MCF 10A (cell line): ENCODE measurements at regions of chr14 and their contacts with region 1.

Region 1: DNA sequence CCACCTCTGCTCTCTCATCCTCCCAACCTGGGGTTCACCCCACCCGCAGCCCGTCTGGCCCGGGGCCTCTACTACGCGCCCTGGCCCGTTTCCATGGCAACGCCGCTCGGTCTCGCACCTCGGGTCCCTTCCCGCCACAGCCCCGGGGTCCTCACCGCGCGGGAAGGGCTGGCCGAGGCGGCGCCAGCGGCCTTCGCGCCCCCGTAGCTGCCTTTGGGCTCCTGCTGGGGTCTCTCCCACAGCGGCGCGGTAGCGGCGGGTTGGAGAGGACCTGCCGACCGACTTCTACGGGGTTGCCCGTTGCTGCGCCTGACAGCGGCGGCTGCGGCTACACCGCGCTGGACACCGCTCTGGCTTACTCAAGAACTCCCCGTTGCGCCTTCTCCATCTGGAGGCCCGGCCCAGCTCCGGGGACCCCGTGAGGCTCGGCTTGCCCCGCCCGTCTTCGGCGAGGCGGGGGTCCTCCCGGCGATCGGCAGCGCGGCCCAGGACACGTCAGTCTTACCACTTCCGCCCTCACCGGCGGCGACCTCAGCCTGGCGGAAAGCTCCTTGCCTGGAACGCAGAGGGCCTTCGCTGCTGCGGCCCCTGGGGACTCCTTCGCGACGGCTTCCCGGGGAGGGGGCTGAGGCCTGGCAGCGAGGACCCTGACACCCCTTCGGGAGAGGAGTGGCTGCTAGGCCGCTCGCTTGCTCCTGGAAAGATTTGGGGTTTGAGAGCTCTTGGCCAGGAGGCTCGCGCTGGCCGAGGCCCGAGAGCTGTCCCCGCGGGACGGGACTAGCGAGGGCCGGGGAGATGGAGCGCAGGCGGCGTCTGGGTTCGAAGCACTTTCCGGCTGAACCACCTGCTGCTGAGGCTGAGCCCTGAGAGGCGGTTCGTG is at the start of gene TM9SF1:
- DNase-seq: peak; percentile 84
- H3K4me3 Mint-ChIP-seq: peak within 1 kb of the TSS; percentile 81
- H3K27ac Mint-ChIP-seq: peak within 1 kb of the TSS; percentile 96
- H3K4me1 Mint-ChIP-seq: peaks cover 18% of the 10 kb centered on the region
- H3K27me3 Mint-ChIP-seq: no peaks in the 10 kb centered on the region
- CTCF ChIP-seq: no peak
- total RNA-seq, gene TM9SF1: 67.8 and 103 TPM in 2 replicates

Region 2: GRCh38 chr14:24114536-24115450 is 80.6 kb before region 1 on chr14 and contains the starts of genes DCAF11 and NRL:
- CTCF ChIA-PET with region 1: interaction called, 3 read pairs
- POLR2A ChIA-PET with region 1: interaction called, 15 read pairs
- intact Hi-C with region 1: no loop called
- DNase-seq: peak; percentile 100
- H3K4me3 Mint-ChIP-seq: peak within 1 kb of the TSS; percentile 97
- H3K27ac Mint-ChIP-seq: peak within 1 kb of the TSS; percentile 99
- H3K4me1 Mint-ChIP-seq: peaks cover 9% of the 10 kb centered on the region
- H3K27me3 Mint-ChIP-seq: no peaks in the 10 kb centered on the region
- CTCF ChIP-seq: no peak
- total RNA-seq, gene DCAF11: 38.6 and 48.8 TPM in 2 replicates
- total RNA-seq, gene NRL: 1.3 and 2.1 TPM in 2 replicates

Region 3: GRCh38 chr14:24146978-24147760 is 48.3 kb before region 1 on chr14 and contains the start of gene RNF31:
- CTCF ChIA-PET with region 1: no interaction called
- POLR2A ChIA-PET with region 1: interaction called, 27 read pairs
- intact Hi-C with region 1: no loop called
- DNase-seq: peak; percentile 99
- H3K4me3 Mint-ChIP-seq: peak within 1 kb of the TSS; percentile 98
- H3K27ac Mint-ChIP-seq: peak within 1 kb of the TSS; percentile 61
- H3K4me1 Mint-ChIP-seq: peaks cover under 1% of the 10 kb centered on the region
- H3K27me3 Mint-ChIP-seq: no peaks in the 10 kb centered on the region
- CTCF ChIP-seq: no peak
- total RNA-seq, gene RNF31: 62.2 and 67.4 TPM in 2 replicates

Region 4: DNA sequence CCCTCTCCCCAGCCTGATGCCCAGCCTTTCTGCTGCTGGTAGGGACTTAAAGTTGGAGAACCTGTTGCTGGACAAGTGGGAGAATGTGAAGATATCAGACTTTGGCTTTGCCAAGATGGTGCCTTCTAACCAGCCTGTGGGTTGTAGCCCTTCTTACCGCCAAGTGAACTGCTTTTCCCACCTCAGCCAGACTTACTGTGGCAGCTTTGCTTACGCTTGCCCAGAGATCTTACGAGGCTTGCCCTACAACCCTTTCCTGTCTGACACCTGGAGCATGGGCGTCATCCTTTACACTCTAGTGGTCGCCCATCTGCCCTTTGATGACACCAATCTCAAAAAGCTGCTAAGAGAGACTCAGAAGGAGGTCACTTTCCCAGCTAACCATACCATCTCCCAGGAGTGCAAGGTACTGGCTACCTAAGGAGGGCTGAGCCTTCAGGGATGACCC is 11.7 kb after region 1 on chr14:
- CTCF ChIA-PET with region 1: interaction called, 5 read pairs
- POLR2A ChIA-PET with region 1: interaction called, 68 read pairs
- intact Hi-C with region 1: no loop called
- DNase-seq: no peak
- H3K4me3 Mint-ChIP-seq: no peak overlapping the region
- H3K27ac Mint-ChIP-seq: no peak overlapping the region
- H3K4me1 Mint-ChIP-seq: no peaks in the 10 kb centered on the region
- H3K27me3 Mint-ChIP-seq: no peaks in the 10 kb centered on the region
- CTCF ChIP-seq: no peak

Region 5: GRCh38 chr14:24232121-24232644 is 36.8 kb after region 1 on chr14 and contains the start of gene NEDD8:
- CTCF ChIA-PET with region 1: no interaction called
- POLR2A ChIA-PET with region 1: interaction called, 14 read pairs
- intact Hi-C with region 1: no loop called
- DNase-seq: peak; percentile 98
- H3K4me3 Mint-ChIP-seq: peak within 1 kb of the TSS; percentile 77
- H3K27ac Mint-ChIP-seq: peak within 1 kb of the TSS; percentile 70
- H3K4me1 Mint-ChIP-seq: peaks cover 24% of the 10 kb centered on the region
- H3K27me3 Mint-ChIP-seq: no peaks in the 10 kb centered on the region
- CTCF ChIP-seq: no peak
- total RNA-seq, gene NEDD8: 233 and 243 TPM in 2 replicates

Region 6: DNA sequence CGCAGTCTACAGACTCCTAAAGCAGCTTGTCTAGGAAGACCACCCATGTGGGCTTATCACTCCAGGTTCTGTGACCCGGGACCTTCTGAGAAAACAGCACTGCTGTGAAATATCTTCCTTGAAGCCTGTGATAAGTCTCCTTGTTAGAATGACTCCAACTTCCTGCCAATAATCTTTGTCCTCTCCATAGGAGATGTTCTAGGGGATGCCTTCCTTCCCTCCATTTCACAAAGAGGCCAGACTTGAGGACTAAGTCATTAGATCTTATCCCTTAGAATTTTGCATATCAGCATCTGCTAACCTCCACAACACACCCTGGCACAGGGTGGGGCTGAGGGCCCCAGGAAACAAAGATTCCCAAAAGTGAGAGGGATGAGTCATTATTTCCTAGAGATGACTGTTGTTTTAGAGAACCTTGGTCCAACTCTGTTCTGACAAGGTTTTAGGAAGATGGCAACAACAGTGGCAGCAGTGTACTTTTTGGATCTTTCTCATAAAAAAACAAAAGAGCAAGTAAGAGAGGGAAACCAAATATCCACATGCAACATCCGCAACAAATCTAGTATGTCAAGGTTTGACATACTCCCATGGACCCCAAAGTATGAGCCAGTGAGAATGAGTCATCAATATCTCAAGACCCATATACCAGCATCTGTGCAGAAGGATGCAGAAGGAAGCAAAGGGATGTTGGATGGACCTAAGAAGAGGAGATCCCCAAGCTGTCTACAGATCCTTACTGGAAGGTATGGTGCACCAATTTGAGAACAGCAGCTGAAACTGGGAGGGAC is 121.9 kb after region 1 on chr14:
- CTCF ChIA-PET with region 1: no interaction called
- POLR2A ChIA-PET with region 1: no interaction called
- intact Hi-C with region 1: no loop called
- DNase-seq: peak; percentile 77
- H3K4me3 Mint-ChIP-seq: peak overlapping the region; percentile 8
- H3K27ac Mint-ChIP-seq: peak overlapping the region; percentile 79
- H3K4me1 Mint-ChIP-seq: peaks cover 20% of the 10 kb centered on the region
- H3K27me3 Mint-ChIP-seq: peaks cover 23% of the 10 kb centered on the region
- CTCF ChIP-seq: no peak